Activated naive CD4-positive, alpha-beta T cell treated with anti-CD3 and anti-CD28 coated beads for 36 hours (primary cell): ENCODE measurements at regions of chr1 and their contacts with region 1.

Region 1: GRCh38 chr1:66242646-66243547 is 291.1 kb upstream of the SGIP1 start:
- DNase-seq: peak; percentile 87
- H3K4me3 Mint-ChIP-seq: no peak overlapping the region
- H3K27ac Mint-ChIP-seq: no peak overlapping the region
- H3K4me1 Mint-ChIP-seq: peaks cover 30% of the 10 kb centered on the region
- H3K27me3 Mint-ChIP-seq: peaks cover 6% of the 10 kb centered on the region

Region 2: GRCh38 chr1:65419681-65420589 is 823.0 kb before region 1 on chr1:
- CTCF ChIA-PET with region 1: no interaction called
- intact Hi-C with region 1: loop called (anchors 5 kb)
- DNase-seq: peak; percentile 99
- H3K4me3 Mint-ChIP-seq: no peak overlapping the region
- H3K27ac Mint-ChIP-seq: peak overlapping the region; percentile 89
- H3K4me1 Mint-ChIP-seq: peaks cover 20% of the 10 kb centered on the region
- H3K27me3 Mint-ChIP-seq: no peaks in the 10 kb centered on the region

Region 3: DNA sequence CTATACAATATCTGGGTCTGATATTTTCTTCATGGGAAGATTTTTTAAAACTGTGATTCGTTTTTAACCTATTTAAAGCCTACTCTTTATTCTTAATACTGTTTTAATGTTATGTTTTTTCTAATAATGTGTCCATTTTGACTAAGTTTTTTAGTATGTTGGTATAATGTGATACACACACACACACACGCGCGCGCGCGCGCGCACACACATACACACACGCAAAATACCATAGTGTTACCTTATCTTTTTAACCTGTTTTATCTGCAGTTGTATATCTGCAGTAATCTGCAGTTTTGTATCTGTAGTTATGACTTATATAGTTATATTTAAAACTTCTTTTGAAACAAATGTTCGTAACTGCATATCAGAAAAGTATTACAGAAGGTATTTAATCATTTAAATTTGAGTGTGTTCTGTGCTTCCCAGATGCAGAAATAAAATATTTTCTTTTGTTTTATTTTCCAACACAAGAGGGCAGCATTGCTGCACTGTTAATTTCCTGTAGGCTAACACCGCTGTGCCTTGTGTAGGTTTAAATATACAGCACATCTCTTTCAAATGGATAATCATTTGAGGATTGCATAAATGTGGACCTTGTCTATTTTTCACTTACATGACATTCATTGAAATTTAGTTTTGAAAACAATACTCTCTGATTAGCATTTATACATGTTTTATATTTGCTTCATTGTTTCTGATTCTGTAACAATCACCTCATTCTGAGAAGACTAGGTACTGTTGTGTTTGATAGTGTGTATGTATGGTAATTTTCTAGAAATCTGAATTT is 284.1 kb before region 1 on chr1:
- CTCF ChIA-PET with region 1: interaction called, 171 read pairs
- intact Hi-C with region 1: loop called (anchors 1 kb)
- DNase-seq: peak; percentile 27
- H3K4me3 Mint-ChIP-seq: no peak overlapping the region
- H3K27ac Mint-ChIP-seq: no peak overlapping the region
- H3K4me1 Mint-ChIP-seq: no peaks in the 10 kb centered on the region
- H3K27me3 Mint-ChIP-seq: no peaks in the 10 kb centered on the region

Region 4: DNA sequence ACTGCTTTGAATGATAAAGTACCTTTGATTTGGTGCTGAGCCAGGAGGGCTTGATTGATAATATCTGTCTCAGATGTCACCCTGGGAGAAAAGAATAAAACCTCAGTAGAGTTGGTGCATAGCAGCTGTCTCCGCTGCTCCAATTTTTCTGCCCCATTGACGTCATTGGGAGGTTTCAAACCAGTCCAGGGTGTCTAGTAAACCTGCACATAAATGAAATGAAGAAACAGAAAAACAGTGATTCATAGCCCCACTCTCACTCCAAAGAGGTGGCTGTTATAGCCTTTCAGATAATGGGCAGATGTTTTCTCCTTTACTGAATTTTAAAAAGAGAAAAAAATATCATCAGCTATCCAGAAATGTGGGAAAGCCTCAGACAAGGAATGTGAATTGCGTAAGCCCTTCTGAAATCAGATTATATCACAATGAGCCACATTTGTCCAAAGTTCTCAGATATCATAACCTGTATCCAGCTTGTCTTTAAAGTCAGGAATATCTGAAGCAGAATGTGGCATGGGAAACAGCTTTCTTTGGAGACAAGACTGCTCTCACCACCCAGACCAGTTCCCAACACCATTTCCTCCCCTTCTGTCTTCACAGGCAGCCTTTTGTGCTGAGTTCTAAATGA is 60.2 kb before region 1 on chr1:
- CTCF ChIA-PET with region 1: interaction called, 42 read pairs
- intact Hi-C with region 1: loop called (anchors 1 kb)
- DNase-seq: peak; percentile 79
- H3K4me3 Mint-ChIP-seq: no peak overlapping the region
- H3K27ac Mint-ChIP-seq: peak overlapping the region; percentile 13
- H3K4me1 Mint-ChIP-seq: peaks cover 33% of the 10 kb centered on the region
- H3K27me3 Mint-ChIP-seq: no peaks in the 10 kb centered on the region

Region 5: DNA sequence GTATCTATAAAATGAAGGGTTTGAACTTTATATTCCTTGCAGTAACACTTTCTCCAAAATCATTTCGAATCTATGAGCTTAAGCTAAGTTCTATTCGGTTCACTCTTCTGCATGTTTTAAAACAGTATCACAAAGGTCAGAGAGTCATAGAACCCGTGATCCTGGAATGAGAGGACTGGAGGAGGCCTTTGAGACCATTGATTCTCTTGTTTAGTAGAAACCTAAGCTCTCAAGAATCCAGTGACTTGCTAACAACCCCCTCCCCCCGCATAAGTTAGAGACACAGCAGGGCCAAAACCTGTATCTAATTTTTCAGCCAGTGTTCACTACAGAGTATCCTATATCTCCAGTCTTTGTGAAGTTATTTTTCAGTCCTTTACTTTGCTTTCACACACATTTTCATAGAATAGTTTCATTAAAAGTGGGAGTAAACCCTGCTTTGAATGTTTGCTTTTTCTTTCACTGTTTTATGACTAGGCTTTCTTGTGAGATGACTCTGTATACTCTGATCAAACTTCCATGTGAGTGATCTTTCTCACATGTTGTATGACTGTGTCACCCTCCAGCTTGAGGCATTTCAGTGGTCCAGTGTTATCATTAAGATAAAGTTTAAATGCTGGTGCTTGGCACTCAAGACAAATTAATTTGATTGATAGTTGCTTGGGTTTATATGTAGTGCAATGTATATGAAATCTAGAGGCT is 15.7 kb after region 1 on chr1:
- CTCF ChIA-PET with region 1: interaction called, 17 read pairs
- intact Hi-C with region 1: loop called (anchors 1 kb)
- DNase-seq: peak; percentile 43
- H3K4me3 Mint-ChIP-seq: no peak overlapping the region
- H3K27ac Mint-ChIP-seq: peak overlapping the region; percentile 3
- H3K4me1 Mint-ChIP-seq: peaks cover 84% of the 10 kb centered on the region
- H3K27me3 Mint-ChIP-seq: no peaks in the 10 kb centered on the region

Region 6: DNA sequence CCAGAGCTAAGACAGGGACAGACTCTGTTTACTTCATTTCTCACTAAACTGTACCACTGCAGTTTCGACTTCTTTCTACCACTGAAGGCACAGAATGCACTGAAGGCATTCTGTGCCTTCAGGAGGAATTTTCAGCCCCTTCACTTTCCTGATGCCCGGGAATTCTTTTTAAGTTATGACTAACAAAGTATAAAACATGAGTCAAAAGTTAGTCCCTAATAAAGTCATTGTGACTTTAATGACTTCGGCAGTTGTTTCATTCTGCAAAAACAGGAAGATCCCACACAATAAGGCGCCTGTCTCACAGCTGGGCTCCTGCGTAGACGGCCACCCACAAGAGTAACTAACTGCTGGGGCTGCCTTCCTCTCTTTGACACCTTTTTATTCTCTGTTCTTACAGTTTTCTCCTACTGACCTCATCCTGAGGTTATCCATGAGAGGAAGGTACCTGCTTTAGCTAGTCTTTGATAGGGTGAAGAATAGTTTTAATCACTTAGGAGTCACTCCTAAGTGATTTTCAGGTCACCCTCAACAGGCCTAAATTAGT is 107.2 kb after region 1 on chr1:
- CTCF ChIA-PET with region 1: interaction called, 9 read pairs
- intact Hi-C with region 1: loop called (anchors 1 kb)
- DNase-seq: peak; percentile 80
- H3K4me3 Mint-ChIP-seq: peak overlapping the region; percentile 33
- H3K27ac Mint-ChIP-seq: peak overlapping the region; percentile 90
- H3K4me1 Mint-ChIP-seq: peaks cover 92% of the 10 kb centered on the region
- H3K27me3 Mint-ChIP-seq: no peaks in the 10 kb centered on the region

Region 7: GRCh38 chr1:66503841-66504470 is 261.1 kb after region 1 on chr1:
- CTCF ChIA-PET with region 1: interaction called, 17 read pairs
- intact Hi-C with region 1: loop called (anchors 2 kb)
- DNase-seq: peak; percentile 74
- H3K4me3 Mint-ChIP-seq: no peak overlapping the region
- H3K27ac Mint-ChIP-seq: no peak overlapping the region
- H3K4me1 Mint-ChIP-seq: no peaks in the 10 kb centered on the region
- H3K27me3 Mint-ChIP-seq: peaks cover 15% of the 10 kb centered on the region